ENCODE measurements at regions of chr22 and their contacts with region 1.

Region 1: GRCh38 chr22:44735540-44736488 is 16.6 kb upstream of the ARHGAP8 start:
- DNase-seq: peak; percentile 85
- ATAC-seq: peak; percentile 75
- H3K4me3 Mint-ChIP-seq: no peak overlapping the region
- H3K27ac Mint-ChIP-seq: no peak overlapping the region
- H3K4me1 Mint-ChIP-seq: no peaks in the 10 kb centered on the region
- H3K27me3 Mint-ChIP-seq: no peaks in the 10 kb centered on the region

Region 2: DNA sequence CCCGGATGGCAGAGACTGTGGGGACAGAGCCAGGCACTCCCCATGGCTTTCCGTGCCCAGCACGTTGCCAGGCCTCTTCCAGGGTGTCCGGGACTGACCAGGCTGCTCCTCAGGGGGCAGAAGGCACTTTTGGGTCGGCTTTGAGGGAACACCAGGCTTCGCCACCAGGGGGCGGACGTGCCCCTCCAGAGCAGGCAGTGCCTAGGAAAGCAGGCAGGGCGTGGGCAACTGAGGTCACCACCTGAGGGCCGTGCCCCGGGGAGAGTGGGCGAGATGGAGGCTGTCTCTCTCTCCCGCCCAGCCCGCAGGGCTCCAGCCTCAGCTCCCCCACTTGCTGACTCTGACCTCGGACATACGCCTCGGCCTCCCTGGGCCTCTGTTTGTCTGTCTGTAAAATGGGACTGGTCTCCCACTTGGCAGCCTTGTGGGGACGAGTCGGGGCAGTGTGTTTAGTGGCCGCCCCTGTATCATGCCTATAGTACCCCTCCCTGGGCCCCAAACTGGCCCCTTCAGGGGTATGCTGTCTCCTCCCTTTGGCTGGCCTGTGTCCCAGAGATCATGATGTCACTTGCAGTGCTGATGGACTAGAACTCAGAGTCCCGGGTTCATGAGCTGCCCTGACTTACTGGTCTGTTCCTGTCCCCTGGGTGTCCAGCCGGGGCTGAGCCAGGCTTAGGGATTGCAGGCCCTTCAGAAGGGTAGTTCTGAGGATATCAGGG is 38.2 kb before region 1 on chr22:
- CTCF ChIA-PET with region 1: interaction called, 91 read pairs
- DNase-seq: peak; percentile 89
- ATAC-seq: peak; percentile 43
- H3K4me3 Mint-ChIP-seq: no peak overlapping the region
- H3K27ac Mint-ChIP-seq: peak overlapping the region; percentile 57
- H3K4me1 Mint-ChIP-seq: peaks cover 17% of the 10 kb centered on the region
- H3K27me3 Mint-ChIP-seq: peaks cover 2% of the 10 kb centered on the region

Measured in activated CD8-positive, alpha-beta memory T cell treated with anti-CD3 and anti-CD28 coated beads, Interleukin-2, amount 10 ng/mL, durations not matched to agents 7 days and 5 days (primary cell).